B cell (primary cell): ENCODE measurements at regions of chr22 and their contacts with region 1.

Region 1: GRCh38 chr22:17481424-17481823 is 81.9 kb upstream of the SLC25A18 start:
- DNase-seq: no peak
- ATAC-seq: no peak
- H3K4me3 ChIP-seq: no peak overlapping the region
- H3K4me3 Mint-ChIP-seq: no peak overlapping the region
- H3K27ac ChIP-seq: no peak overlapping the region
- H3K27ac Mint-ChIP-seq: no peak overlapping the region
- H3K4me1 ChIP-seq: peaks cover 5 to 7% of the 10 kb centered on the region in 2 donors
- H3K4me1 Mint-ChIP-seq: peaks cover 8% of the 10 kb centered on the region
- H3K27me3 ChIP-seq: no peaks in the 10 kb centered on the region
- H3K27me3 Mint-ChIP-seq: peaks cover 19% of the 10 kb centered on the region
- CTCF ChIP-seq: no peak

Region 2: DNA sequence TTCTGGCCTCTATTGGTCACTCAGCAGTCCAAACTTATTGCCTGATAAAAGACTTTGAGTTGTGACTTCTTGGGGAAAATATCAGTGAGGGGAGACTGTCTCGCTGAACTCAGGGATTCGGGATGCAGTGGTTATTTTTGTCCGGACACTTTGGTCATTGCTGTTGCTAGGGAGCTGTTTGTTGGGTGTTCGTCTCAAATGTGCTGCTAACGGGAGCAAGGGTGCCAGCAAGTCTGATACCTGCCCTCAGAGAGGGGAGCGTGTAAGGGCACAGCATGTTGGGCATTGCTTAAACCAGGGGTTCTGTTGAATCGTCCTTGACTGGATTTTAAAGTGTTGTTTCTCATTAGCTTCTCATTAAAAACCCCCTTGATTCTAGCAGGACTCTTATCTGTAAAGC is 32.7 kb after region 1 on chr22:
- CTCF ChIA-PET with region 1: no interaction called
- POLR2A ChIA-PET with region 1: interaction called, 10 read pairs
- intact Hi-C with region 1: no loop called
- DNase-seq: no peak
- ATAC-seq: no peak
- H3K4me3 ChIP-seq: no peak overlapping the region
- H3K4me3 Mint-ChIP-seq: no peak overlapping the region
- H3K27ac ChIP-seq: no peak overlapping the region
- H3K27ac Mint-ChIP-seq: no peak overlapping the region
- H3K4me1 ChIP-seq: no peaks in the 10 kb centered on the region
- H3K4me1 Mint-ChIP-seq: no peaks in the 10 kb centered on the region
- H3K27me3 ChIP-seq: no peaks in the 10 kb centered on the region
- H3K27me3 Mint-ChIP-seq: peaks cover 3% of the 10 kb centered on the region
- CTCF ChIP-seq: no peak

Region 3: GRCh38 chr22:17672417-17672991 is 191.1 kb after region 1 on chr22:
- CTCF ChIA-PET with region 1: no interaction called
- POLR2A ChIA-PET with region 1: no interaction called
- intact Hi-C with region 1: no loop called
- DNase-seq: no peak
- ATAC-seq: no peak
- H3K4me3 ChIP-seq: no peak overlapping the region
- H3K4me3 Mint-ChIP-seq: no peak overlapping the region
- H3K27ac ChIP-seq: no peak overlapping the region
- H3K27ac Mint-ChIP-seq: no peak overlapping the region
- H3K4me1 ChIP-seq: peaks cover 0 to 5% of the 10 kb centered on the region in 2 donors
- H3K4me1 Mint-ChIP-seq: peaks cover 14% of the 10 kb centered on the region
- H3K27me3 ChIP-seq: no peaks in the 10 kb centered on the region
- H3K27me3 Mint-ChIP-seq: no peaks in the 10 kb centered on the region
- CTCF ChIP-seq: no peak